ENCODE measurements at regions of chr3 and their contacts with region 1.

Region 1: DNA sequence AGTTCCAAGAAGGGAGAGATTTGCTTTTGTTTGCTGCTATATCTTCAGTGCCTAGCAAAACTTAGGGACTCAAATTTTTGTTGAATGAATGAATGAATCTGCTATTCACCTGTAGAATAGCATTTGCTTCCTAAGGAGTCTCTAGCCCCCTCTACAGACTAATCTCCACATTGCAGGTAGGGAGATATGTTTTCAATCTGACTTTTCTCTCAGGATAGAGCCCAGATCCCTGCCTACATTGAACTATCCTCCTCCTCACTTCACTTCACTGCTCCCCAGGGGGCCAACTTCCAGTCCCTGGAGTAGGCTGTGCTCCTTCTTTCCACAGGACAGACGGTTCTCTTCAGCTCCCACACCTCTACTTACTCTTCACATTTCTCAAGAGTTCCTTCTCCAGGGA is 81.9 kb upstream of the PTX3 start:
- ATAC-seq: peak in 2 of 8 experiments; percentile 26 to 36
- H3K4me3 ChIP-seq: no peak overlapping the region
- H3K27ac ChIP-seq: no peak overlapping the region
- H3K4me1 ChIP-seq: no peaks in the 10 kb centered on the region

Region 2: GRCh38 chr3:157201648-157202278 is 153.0 kb before region 1 on chr3:
- in situ Hi-C with region 1: loop called in 1 of 9 experiments (anchors 25 kb)
- ATAC-seq: peak in 4 of 8 experiments; percentile 43 to 88 (median 80)
- H3K4me3 ChIP-seq: no peak overlapping the region
- H3K27ac ChIP-seq: no peak overlapping the region
- H3K4me1 ChIP-seq: peaks cover 3 to 5% of the 10 kb centered on the region in 2 donors